ENCODE measurements at regions of chr17 and their contacts with region 1.

Region 1: GRCh38 chr17:16285957-16286640 is 67.2 kb downstream of the CENPV start:
- DNase-seq: peak; percentile 93
- H3K4me3 ChIP-seq: peak overlapping the region in 2 of 3 experiments; percentile 11 to 35
- H3K27ac ChIP-seq: peak overlapping the region; percentile 75
- H3K4me1 ChIP-seq: peaks cover 54% of the 10 kb centered on the region
- H3K27me3 ChIP-seq: no peaks in the 10 kb centered on the region
- CTCF ChIP-seq: peak; percentile 36 to 41

Region 2: DNA sequence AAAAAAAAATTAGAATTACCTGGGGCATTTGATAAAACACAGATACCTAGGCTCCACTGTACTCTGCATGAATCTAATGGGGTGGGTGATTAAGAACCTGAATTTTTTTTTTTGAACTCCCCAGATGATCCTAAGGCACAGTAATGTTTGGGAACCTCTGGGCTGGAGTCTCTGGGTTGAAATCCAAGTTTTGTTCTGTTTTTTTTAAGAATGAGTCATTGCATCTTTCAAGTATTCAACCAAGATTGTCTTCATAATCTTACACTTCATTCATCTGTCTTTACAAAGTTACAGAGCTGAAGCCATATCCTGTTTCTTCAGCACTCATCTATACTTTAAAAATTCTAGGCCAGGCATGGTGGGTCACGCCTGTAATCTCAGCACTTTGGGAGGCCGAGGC is 16.4 kb before region 1 on chr17:
- CTCF ChIA-PET with region 1: no interaction called
- dilution Hi-C with region 1: no loop called
- in situ Hi-C with region 1: no loop called
- intact Hi-C with region 1: no loop called
- DNase-seq: no peak
- H3K4me3 ChIP-seq: no peak overlapping the region
- H3K27ac ChIP-seq: no peak overlapping the region
- H3K4me1 ChIP-seq: peaks cover 15% of the 10 kb centered on the region
- H3K27me3 ChIP-seq: no peaks in the 10 kb centered on the region
- CTCF ChIP-seq: no peak

Region 3: DNA sequence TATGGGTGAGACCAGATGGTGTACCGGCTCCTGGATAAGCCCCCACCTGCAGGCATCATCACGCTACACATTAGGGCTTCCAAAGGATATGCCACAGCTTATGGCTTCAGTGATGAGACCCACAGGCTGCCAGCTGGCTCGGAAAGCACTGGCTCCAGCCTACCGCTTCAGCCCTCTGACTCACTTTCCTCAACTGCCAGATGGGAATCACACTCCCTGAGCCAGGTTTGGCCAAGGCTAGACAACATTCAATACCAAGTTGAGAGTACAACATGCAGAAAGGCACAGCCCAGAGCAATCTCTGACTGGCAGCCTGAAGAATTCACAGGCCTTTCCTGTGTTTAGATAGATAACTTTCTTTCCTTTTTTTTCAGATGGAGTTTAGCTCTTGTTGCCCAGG is 56.9 kb after region 1 on chr17:
- CTCF ChIA-PET with region 1: no interaction called
- dilution Hi-C with region 1: no loop called
- in situ Hi-C with region 1: no loop called
- intact Hi-C with region 1: loop called (anchors 10 kb)
- DNase-seq: no peak
- H3K4me3 ChIP-seq: no peak overlapping the region
- H3K27ac ChIP-seq: no peak overlapping the region
- H3K4me1 ChIP-seq: no peaks in the 10 kb centered on the region
- H3K27me3 ChIP-seq: no peaks in the 10 kb centered on the region
- CTCF ChIP-seq: no peak

Measured in mammary epithelial cell (primary cell).